Activated CD4-positive, alpha-beta memory T cell treated with anti-CD3 and anti-CD28 coated beads, Interleukin-2, amount 10 ng/mL, durations not matched to agents 7 days and 5 days (primary cell): ENCODE measurements at regions of chr1 and their contacts with region 1.

Region 1: DNA sequence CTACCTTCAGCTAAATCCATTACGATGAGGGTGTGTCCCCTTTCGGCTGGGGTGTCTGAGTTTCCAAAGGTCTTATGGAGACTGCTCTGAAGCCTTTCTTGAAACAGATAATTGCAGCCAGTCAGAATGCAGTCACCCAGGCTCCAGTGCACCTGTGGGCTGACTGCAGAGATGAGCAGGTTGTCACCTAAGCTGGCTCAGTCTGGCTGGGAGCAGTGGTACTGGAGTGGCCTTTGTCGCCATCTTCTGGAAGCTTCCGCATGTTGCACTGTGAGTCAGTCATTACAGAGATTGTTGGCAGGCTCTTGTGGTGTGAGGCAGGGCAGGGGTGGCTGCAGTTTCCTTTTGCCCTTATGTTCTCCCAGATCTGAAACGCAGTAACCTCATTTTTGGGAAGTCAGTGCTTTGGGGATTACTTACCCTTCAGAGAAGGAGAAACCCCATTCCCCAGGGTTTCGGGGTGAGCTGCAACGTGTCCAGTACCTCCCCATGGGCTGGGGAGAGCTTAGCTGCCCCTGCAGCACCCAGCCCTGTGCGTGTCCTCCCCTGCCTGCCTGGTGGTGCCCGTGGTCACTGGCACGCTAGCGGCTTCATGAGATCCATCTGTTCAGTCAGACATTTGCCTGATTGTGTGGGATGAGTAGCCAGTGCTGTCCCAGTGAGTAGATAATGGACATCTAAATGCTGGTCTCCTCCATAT is 48.0 kb downstream of the SMYD2 start:
- DNase-seq: peak; percentile 84
- H3K4me3 Mint-ChIP-seq: no peak overlapping the region
- H3K27ac Mint-ChIP-seq: no peak overlapping the region
- H3K4me1 Mint-ChIP-seq: peaks cover 16% of the 10 kb centered on the region
- H3K27me3 Mint-ChIP-seq: no peaks in the 10 kb centered on the region

Region 2: DNA sequence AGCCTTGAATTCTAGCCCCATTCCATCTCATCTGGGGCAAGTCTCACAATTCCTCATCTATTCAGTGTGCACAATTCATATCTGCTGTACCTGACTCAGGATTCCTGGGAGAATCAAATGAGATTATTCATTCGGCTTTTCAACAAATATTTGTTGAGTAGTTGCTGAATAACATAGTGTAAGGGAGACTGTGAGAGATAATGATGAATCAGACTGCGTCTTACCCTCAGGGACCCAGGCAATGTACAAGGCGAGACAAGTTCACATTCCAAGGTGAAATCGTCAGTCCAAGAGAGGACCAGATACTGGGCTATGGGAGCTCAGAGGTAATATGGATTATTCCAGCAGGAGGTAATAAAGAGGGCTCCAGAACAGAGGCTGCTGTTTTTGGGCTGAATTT is 115.8 kb before region 1 on chr1:
- CTCF ChIA-PET with region 1: interaction called, 146 read pairs
- POLR2A ChIA-PET with region 1: interaction called, 5 read pairs
- DNase-seq: no peak
- H3K4me3 Mint-ChIP-seq: no peak overlapping the region
- H3K27ac Mint-ChIP-seq: no peak overlapping the region
- H3K4me1 Mint-ChIP-seq: peaks cover 1% of the 10 kb centered on the region
- H3K27me3 Mint-ChIP-seq: peaks cover 26% of the 10 kb centered on the region

Region 3: DNA sequence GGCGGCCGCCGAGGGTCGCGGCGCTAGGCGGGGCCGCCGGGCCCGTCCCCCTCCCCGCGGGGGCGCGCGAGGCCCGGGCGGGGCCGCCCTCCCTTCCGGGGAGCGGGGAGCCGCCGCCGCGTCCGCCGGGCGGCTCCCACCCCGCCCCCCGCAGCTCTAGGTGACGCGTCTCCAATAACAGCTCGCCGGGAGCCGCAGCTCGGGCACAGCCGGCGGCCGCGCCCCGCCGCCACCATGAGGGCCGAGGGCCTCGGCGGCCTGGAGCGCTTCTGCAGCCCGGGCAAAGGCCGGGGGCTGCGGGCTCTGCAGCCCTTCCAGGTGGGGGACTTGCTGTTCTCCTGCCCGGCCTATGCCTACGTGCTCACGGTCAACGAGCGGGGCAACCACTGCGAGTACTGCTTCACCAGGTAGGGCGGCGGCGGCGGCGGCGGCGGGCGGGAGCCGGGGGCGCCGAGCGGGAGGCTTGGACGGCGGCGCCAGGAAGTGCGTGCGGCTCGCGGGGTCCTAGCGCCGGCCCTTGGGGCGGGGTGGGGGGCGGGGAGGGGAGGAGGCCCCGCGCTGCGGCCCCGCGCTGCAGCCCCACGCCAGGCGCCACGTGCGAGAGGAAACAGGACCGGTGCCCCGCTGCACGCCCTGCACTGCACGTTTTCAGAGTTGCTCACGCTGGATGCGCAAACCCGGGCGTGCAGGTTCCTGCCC is 47.8 kb before region 1 on chr1 and contains the start of gene SMYD2:
- CTCF ChIA-PET with region 1: interaction called, 13 read pairs
- POLR2A ChIA-PET with region 1: no interaction called
- DNase-seq: peak; percentile 73
- H3K4me3 Mint-ChIP-seq: peak within 1 kb of the TSS; percentile 96
- H3K27ac Mint-ChIP-seq: peak within 1 kb of the TSS; percentile 72
- H3K4me1 Mint-ChIP-seq: peaks cover 41% of the 10 kb centered on the region
- H3K27me3 Mint-ChIP-seq: no peaks in the 10 kb centered on the region
- total RNA-seq, gene SMYD2: 33.8 to 34.9 TPM

Region 4: DNA sequence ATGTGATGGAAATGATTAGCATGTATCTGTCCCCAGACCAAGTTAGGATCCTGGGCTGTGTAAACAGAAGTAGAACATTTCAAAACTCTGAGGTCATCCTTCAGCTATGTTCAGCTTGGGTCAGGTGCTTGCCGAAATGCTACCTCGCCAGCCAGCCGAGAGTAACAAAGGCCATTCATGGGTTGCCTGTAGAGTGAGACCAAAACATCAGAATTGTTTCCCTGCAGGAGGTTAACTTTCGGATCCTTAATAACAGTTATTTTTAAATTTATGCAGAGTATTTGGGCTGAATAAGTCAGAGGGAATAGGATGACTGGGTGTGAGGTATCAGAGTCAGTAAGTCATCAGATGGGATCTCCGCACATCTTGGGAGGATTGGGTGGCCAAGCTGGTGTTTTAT is 12.3 kb before region 1 on chr1:
- CTCF ChIA-PET with region 1: interaction called, 50 read pairs
- POLR2A ChIA-PET with region 1: no interaction called
- DNase-seq: no peak
- H3K4me3 Mint-ChIP-seq: no peak overlapping the region
- H3K27ac Mint-ChIP-seq: no peak overlapping the region
- H3K4me1 Mint-ChIP-seq: peaks cover 5% of the 10 kb centered on the region
- H3K27me3 Mint-ChIP-seq: no peaks in the 10 kb centered on the region

Region 5: GRCh38 chr1:214367841-214368240 is 38.9 kb after region 1 on chr1:
- CTCF ChIA-PET with region 1: no interaction called
- POLR2A ChIA-PET with region 1: no interaction called
- DNase-seq: no peak
- H3K4me3 Mint-ChIP-seq: no peak overlapping the region
- H3K27ac Mint-ChIP-seq: no peak overlapping the region
- H3K4me1 Mint-ChIP-seq: no peaks in the 10 kb centered on the region
- H3K27me3 Mint-ChIP-seq: peaks cover 10% of the 10 kb centered on the region

Region 6: GRCh38 chr1:214413315-214413714 is 84.4 kb after region 1 on chr1:
- CTCF ChIA-PET with region 1: no interaction called
- POLR2A ChIA-PET with region 1: no interaction called
- DNase-seq: no peak
- H3K4me3 Mint-ChIP-seq: no peak overlapping the region
- H3K27ac Mint-ChIP-seq: no peak overlapping the region
- H3K4me1 Mint-ChIP-seq: peaks cover 14% of the 10 kb centered on the region
- H3K27me3 Mint-ChIP-seq: no peaks in the 10 kb centered on the region

Region 7: DNA sequence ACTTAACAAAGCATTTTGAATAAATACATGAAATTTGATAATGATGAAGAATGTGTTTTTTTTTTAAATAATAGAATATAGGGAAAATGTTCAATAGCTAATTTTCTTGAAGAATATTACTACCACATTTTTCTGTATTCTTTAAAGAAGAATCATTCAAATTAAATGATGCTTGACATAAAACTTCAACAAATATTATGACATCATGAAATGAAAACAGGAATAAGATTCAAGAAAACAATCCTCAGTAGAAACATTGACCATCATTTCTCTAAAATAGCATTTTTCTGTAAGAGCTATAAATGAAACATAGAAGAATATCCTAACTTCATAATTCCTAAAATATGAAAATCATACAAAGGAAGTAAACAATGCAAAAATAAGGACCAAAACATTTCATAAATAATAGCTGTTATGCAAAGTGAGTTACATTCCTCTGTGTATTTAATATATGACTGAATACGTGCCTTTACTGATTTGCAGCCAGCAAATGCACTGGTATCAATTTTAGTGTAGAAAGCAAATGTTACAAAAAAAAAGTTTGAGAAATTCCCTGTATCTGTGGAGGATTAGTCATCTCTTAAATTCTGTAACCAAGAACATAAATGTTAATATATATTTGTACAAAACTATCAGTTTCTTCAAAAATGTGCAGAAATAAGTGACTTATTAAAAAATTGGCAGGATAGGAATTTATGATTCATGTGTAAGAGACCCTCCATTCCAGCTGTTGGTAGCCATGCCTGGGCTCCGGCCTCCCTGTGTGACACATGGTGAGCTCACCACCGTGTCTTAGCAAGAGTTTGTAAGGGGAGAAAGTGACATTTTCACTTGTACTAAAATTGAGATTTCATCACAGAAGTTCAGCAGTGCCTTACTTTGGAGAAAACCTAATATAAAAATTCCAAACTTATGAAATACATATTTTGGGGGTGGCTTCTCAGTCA is 237.5 kb after region 1 on chr1:
- CTCF ChIA-PET with region 1: interaction called, 11 read pairs
- POLR2A ChIA-PET with region 1: no interaction called
- DNase-seq: no peak
- H3K4me3 Mint-ChIP-seq: no peak overlapping the region
- H3K27ac Mint-ChIP-seq: no peak overlapping the region
- H3K4me1 Mint-ChIP-seq: no peaks in the 10 kb centered on the region
- H3K27me3 Mint-ChIP-seq: peaks cover 24% of the 10 kb centered on the region

Region 8: GRCh38 chr1:214632091-214632490 is 303.2 kb after region 1 on chr1:
- CTCF ChIA-PET with region 1: interaction called, 16 read pairs
- POLR2A ChIA-PET with region 1: no interaction called
- DNase-seq: peak; percentile 63
- H3K4me3 Mint-ChIP-seq: peak overlapping the region; percentile 19
- H3K27ac Mint-ChIP-seq: peak overlapping the region; percentile 69
- H3K4me1 Mint-ChIP-seq: peaks cover 25% of the 10 kb centered on the region
- H3K27me3 Mint-ChIP-seq: no peaks in the 10 kb centered on the region